ENCODE measurements at regions of chr5 and their contacts with region 1.

Region 1: GRCh38 chr5:96934708-96935558 is 947 bp upstream of the LNPEP start:
- DNase-seq: peak; percentile 69 to 96
- H3K4me3 ChIP-seq: peak overlapping the region; percentile 90 to 95
- H3K27ac ChIP-seq: peak overlapping the region; percentile 92 to 94
- H3K4me1 ChIP-seq: peaks cover 4 to 13% of the 10 kb centered on the region in 2 donors
- H3K27me3 ChIP-seq: no peaks in the 10 kb centered on the region
- CTCF ChIP-seq: no peak

Region 2: GRCh38 chr5:96702503-96703383 is 232.2 kb before region 1 on chr5:
- intact Hi-C with region 1: loop called (anchors 1 kb)
- DNase-seq: peak; percentile 90 to 99
- H3K4me3 ChIP-seq: peak overlapping the region; percentile 63 to 75
- H3K27ac ChIP-seq: peak overlapping the region; percentile 90 to 94
- H3K4me1 ChIP-seq: peaks cover 0 to 21% of the 10 kb centered on the region in 2 donors
- H3K27me3 ChIP-seq: no peaks in the 10 kb centered on the region
- CTCF ChIP-seq: no peak

Region 3: DNA sequence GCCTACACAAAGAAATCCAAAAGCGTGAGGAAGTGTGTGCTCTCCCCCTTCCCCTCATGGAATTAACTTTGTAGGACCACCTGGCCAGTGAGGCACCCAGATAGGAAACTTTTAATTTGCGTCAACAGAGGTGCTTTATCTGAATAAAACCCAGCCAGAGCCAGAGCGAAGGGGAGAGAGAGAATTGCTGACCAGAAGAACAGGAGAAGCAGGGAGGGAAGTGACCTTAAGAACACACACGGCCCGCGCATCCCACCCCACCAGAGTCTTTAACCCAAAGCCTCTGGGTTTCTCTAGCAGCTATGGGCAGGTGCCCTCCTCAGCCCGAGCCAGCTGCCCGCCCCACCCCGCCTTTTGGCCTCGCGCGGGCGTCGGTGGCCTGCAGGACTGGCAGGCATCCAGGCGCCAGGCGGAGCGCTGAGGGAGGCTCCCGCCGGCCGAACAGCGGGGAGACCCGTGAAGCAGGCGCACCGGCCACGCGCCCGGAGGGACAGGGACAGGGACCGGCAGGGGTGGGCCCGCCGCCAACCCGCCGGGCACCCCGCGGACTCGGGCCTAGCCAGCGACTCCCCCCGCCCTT is 127.8 kb before region 1 on chr5:
- intact Hi-C with region 1: loop called (anchors 1 kb)
- DNase-seq: peak in 1 of 2 donors; percentile 84
- H3K4me3 ChIP-seq: peak overlapping the region; percentile 95 to 99
- H3K27ac ChIP-seq: peak overlapping the region; percentile 100
- H3K4me1 ChIP-seq: peaks cover 0 to 4% of the 10 kb centered on the region in 2 donors
- H3K27me3 ChIP-seq: no peaks in the 10 kb centered on the region
- CTCF ChIP-seq: no peak

Region 4: GRCh38 chr5:96838201-96839070 is 96.5 kb before region 1 on chr5:
- intact Hi-C with region 1: no loop called
- DNase-seq: no peak
- H3K4me3 ChIP-seq: no peak overlapping the region
- H3K27ac ChIP-seq: no peak overlapping the region
- H3K4me1 ChIP-seq: no peaks in the 10 kb centered on the region
- H3K27me3 ChIP-seq: no peaks in the 10 kb centered on the region
- CTCF ChIP-seq: no peak

Region 5: GRCh38 chr5:96876292-96876850 is 58.6 kb before region 1 on chr5 and contains the start of gene ERAP2:
- intact Hi-C with region 1: loop called (anchors 5 kb)
- DNase-seq: no peak
- H3K4me3 ChIP-seq: peak within 1 kb of the TSS; percentile 60 to 85
- H3K27ac ChIP-seq: peak within 1 kb of the TSS; percentile 41 to 42
- H3K4me1 ChIP-seq: no peaks in the 10 kb centered on the region
- H3K27me3 ChIP-seq: no peaks in the 10 kb centered on the region
- CTCF ChIP-seq: no peak
- total RNA-seq, gene ERAP2: 20.6 TPM

Region 6: GRCh38 chr5:97183100-97183929 is 248.4 kb after region 1 on chr5 and contains the start of gene RIOK2:
- intact Hi-C with region 1: loop called (anchors 1 kb)
- DNase-seq: peak; percentile 74 to 96
- H3K4me3 ChIP-seq: peak within 1 kb of the TSS; percentile 69 to 79
- H3K27ac ChIP-seq: peak within 1 kb of the TSS; percentile 73 to 93
- H3K4me1 ChIP-seq: peaks cover 0 to 14% of the 10 kb centered on the region in 2 donors
- H3K27me3 ChIP-seq: no peaks in the 10 kb centered on the region
- CTCF ChIP-seq: no peak
- total RNA-seq, gene RIOK2: 3.7 TPM

Region 7: GRCh38 chr5:98773464-98774191 is 1838.7 kb after region 1 on chr5 and contains the start of gene RGMB:
- intact Hi-C with region 1: loop called (anchors 5 kb)
- DNase-seq: peak; percentile 94 to 99
- H3K4me3 ChIP-seq: peak within 1 kb of the TSS; percentile 67 to 94
- H3K27ac ChIP-seq: peak within 1 kb of the TSS; percentile 88 to 91
- H3K4me1 ChIP-seq: peaks cover 0 to 13% of the 10 kb centered on the region in 2 donors
- H3K27me3 ChIP-seq: no peaks in the 10 kb centered on the region
- CTCF ChIP-seq: no peak
- total RNA-seq, gene RGMB: 20.9 TPM

Region 8: GRCh38 chr5:98928873-98929696 is 1994.2 kb after region 1 on chr5 and contains the start of gene CHD1:
- intact Hi-C with region 1: loop called (anchors 2 kb)
- DNase-seq: peak; percentile 93 to 99
- H3K4me3 ChIP-seq: peak within 1 kb of the TSS; percentile 91 to 93
- H3K27ac ChIP-seq: peak within 1 kb of the TSS; percentile 100
- H3K4me1 ChIP-seq: peaks cover 0 to 20% of the 10 kb centered on the region in 2 donors
- H3K27me3 ChIP-seq: no peaks in the 10 kb centered on the region
- CTCF ChIP-seq: no peak
- total RNA-seq, gene CHD1: 35.5 TPM

Measured in ascending aorta (tissue), 2 donors.